ENCODE measurements at regions of chr1 and their contacts with region 1.

Region 1: GRCh38 chr1:162612606-162613400 is 19.5 kb upstream of the DDR2 start:
- DNase-seq: no peak
- ATAC-seq: no peak; the same call in 2 of the 3 replicates
- H3K4me3 ChIP-seq: no peak overlapping the region
- H3K27ac ChIP-seq: no peak overlapping the region
- H3K4me1 ChIP-seq: no peaks in the 10 kb centered on the region
- H3K27me3 ChIP-seq: no peaks in the 10 kb centered on the region
- CTCF ChIP-seq: no peak
- EP300 ChIP-seq: no peak
- POLR2A ChIP-seq: no peak
- RAD21 ChIP-seq: no peak

Region 2: DNA sequence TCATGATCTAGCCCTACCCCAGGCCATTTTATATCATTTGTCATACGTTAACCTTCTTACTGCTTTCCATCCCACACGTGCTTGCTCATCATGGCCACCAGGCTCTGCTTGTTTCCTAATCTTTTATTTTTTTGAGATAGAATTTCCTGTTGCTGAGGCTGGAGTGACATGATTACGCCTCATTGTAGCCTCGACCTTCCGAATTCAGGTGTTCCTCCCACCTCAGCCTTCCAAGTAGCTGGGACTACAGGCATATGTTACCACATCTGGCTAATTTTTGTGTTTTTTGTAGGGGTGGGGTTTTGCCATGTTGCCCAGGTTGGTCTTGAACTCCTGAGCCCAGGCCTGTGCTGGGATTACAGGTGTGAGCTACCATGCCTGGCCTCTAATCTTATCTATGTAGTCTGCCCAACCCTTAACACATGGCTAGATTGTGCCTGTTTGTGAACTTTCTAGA is 48.0 kb before region 1 on chr1:
- CTCF ChIA-PET with region 1: interaction called, 15 read pairs
- POLR2A ChIA-PET with region 1: no interaction called
- RAD21 ChIA-PET with region 1: interaction called, 3 read pairs
- SMC1A ChIA-PET with region 1: interaction called, 5 read pairs
- in situ Hi-C with region 1: no loop called
- intact Hi-C with region 1: no loop called
- DNase-seq: no peak
- ATAC-seq: no peak
- H3K4me3 ChIP-seq: no peak overlapping the region
- H3K27ac ChIP-seq: no peak overlapping the region
- H3K4me1 ChIP-seq: no peaks in the 10 kb centered on the region; the same call in 1 of the 2 replicates
- H3K27me3 ChIP-seq: no peaks in the 10 kb centered on the region
- CTCF ChIP-seq: no peak
- EP300 ChIP-seq: no peak
- POLR2A ChIP-seq: no peak
- RAD21 ChIP-seq: no peak

Region 3: GRCh38 chr1:162596514-162597170 is 16.2 kb before region 1 on chr1:
- CTCF ChIA-PET with region 1: interaction called, 28 read pairs
- POLR2A ChIA-PET with region 1: interaction called, 3 read pairs
- RAD21 ChIA-PET with region 1: interaction called, 3 read pairs
- SMC1A ChIA-PET with region 1: interaction called, 24 read pairs
- in situ Hi-C with region 1: no loop called
- intact Hi-C with region 1: no loop called
- DNase-seq: no peak
- ATAC-seq: peak; percentile 70
- H3K4me3 ChIP-seq: no peak overlapping the region
- H3K27ac ChIP-seq: no peak overlapping the region
- H3K4me1 ChIP-seq: no peaks in the 10 kb centered on the region
- H3K27me3 ChIP-seq: no peaks in the 10 kb centered on the region
- CTCF ChIP-seq: no peak
- EP300 ChIP-seq: no peak
- POLR2A ChIP-seq: no peak
- RAD21 ChIP-seq: no peak

Region 4: GRCh38 chr1:162627662-162628296 is 15.0 kb after region 1 on chr1:
- CTCF ChIA-PET with region 1: interaction called, 79 read pairs
- POLR2A ChIA-PET with region 1: interaction called, 4 read pairs
- RAD21 ChIA-PET with region 1: interaction called, 27 read pairs
- SMC1A ChIA-PET with region 1: interaction called, 48 read pairs
- in situ Hi-C with region 1: no loop called
- intact Hi-C with region 1: no loop called
- DNase-seq: no peak
- ATAC-seq: peak; percentile 53
- H3K4me3 ChIP-seq: no peak overlapping the region
- H3K27ac ChIP-seq: no peak overlapping the region
- H3K4me1 ChIP-seq: peaks cover 27% of the 10 kb centered on the region
- H3K27me3 ChIP-seq: no peaks in the 10 kb centered on the region
- CTCF ChIP-seq: peak; percentile 31 to 47 (median 47)
- EP300 ChIP-seq: no peak
- POLR2A ChIP-seq: no peak
- RAD21 ChIP-seq: peak; percentile 49

Region 5: GRCh38 chr1:162678439-162678838 is 65.6 kb after region 1 on chr1:
- CTCF ChIA-PET with region 1: interaction called, 20 read pairs
- POLR2A ChIA-PET with region 1: no interaction called
- RAD21 ChIA-PET with region 1: interaction called, 7 read pairs
- SMC1A ChIA-PET with region 1: interaction called, 5 read pairs
- in situ Hi-C with region 1: no loop called
- intact Hi-C with region 1: no loop called
- DNase-seq: no peak
- ATAC-seq: no peak
- H3K4me3 ChIP-seq: no peak overlapping the region
- H3K27ac ChIP-seq: no peak overlapping the region
- H3K4me1 ChIP-seq: peaks cover 8% of the 10 kb centered on the region
- H3K27me3 ChIP-seq: no peaks in the 10 kb centered on the region
- CTCF ChIP-seq: no peak
- EP300 ChIP-seq: no peak
- POLR2A ChIP-seq: no peak
- RAD21 ChIP-seq: no peak

Region 6: GRCh38 chr1:162847839-162848453 is 235.1 kb after region 1 on chr1:
- CTCF ChIA-PET with region 1: interaction called, 13 read pairs
- POLR2A ChIA-PET with region 1: no interaction called
- RAD21 ChIA-PET with region 1: interaction called, 5 read pairs
- SMC1A ChIA-PET with region 1: interaction called, 13 read pairs
- in situ Hi-C with region 1: no loop called
- intact Hi-C with region 1: no loop called
- DNase-seq: no peak
- ATAC-seq: peak; percentile 79
- H3K4me3 ChIP-seq: no peak overlapping the region
- H3K27ac ChIP-seq: no peak overlapping the region
- H3K4me1 ChIP-seq: no peaks in the 10 kb centered on the region
- H3K27me3 ChIP-seq: no peaks in the 10 kb centered on the region; a peak in 1 of 4 replicates
- CTCF ChIP-seq: peak; percentile 81 to 83 (median 82)
- EP300 ChIP-seq: no peak
- POLR2A ChIP-seq: no peak
- RAD21 ChIP-seq: peak; percentile 83